Gastrocnemius medialis (tissue), 4 donors: ENCODE measurements at regions of chr14 and their contacts with region 1.

Region 1: DNA sequence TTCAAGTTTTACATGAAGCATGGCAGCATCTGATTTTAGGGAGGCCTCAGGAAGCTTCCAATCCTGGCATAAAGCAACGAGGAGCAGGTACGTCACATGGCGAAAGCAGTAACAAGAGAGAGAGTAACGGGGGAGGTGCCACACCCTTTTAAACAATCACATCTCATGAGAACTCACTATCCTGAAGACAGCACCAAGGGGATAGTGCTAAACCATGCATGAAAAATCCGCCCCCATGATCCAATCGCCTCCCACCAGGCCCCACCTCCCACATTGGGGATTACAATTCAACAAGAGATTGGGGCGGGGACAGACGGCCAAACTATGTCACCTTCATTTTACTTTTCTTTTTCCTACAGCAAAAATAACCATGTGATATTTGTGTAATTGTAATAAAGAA is 7.2 kb upstream of the MAP3K9 start:
- DNase-seq: no peak
- ATAC-seq: no peak
- H3K4me3 ChIP-seq: no peak overlapping the region
- H3K27ac ChIP-seq: no peak overlapping the region
- H3K4me1 ChIP-seq: peaks cover 7% of the 10 kb centered on the region in 2 donors
- H3K27me3 ChIP-seq: peaks cover 2 to 9% (median 6%) of the 10 kb centered on the region in 3 donors
- CTCF ChIP-seq: no peak
- POLR2A ChIP-seq: no peak

Region 2: GRCh38 chr14:70600382-70601157 is 216.0 kb before region 1 on chr14 and contains the start of gene MED6:
- in situ Hi-C with region 1: loop called in 2 of 4 experiments (anchors 5 to 10 kb)
- intact Hi-C with region 1: loop called (anchors 5 kb)
- DNase-seq: peak; percentile 87 to 91
- ATAC-seq: peak; percentile 98 to 100
- H3K4me3 ChIP-seq: peak within 1 kb of the TSS; percentile 77 to 98 (median 92)
- H3K27ac ChIP-seq: peak within 1 kb of the TSS; percentile 78 to 89 (median 80)
- H3K4me1 ChIP-seq: peaks cover 15 to 18% of the 10 kb centered on the region in 2 donors
- H3K27me3 ChIP-seq: no peaks in the 10 kb centered on the region
- CTCF ChIP-seq: no peak
- POLR2A ChIP-seq: peak in 1 of 2 donors; percentile 31
- total RNA-seq, gene MED6: 13.9 to 25.0 (median 20.2) TPM

Region 3: DNA sequence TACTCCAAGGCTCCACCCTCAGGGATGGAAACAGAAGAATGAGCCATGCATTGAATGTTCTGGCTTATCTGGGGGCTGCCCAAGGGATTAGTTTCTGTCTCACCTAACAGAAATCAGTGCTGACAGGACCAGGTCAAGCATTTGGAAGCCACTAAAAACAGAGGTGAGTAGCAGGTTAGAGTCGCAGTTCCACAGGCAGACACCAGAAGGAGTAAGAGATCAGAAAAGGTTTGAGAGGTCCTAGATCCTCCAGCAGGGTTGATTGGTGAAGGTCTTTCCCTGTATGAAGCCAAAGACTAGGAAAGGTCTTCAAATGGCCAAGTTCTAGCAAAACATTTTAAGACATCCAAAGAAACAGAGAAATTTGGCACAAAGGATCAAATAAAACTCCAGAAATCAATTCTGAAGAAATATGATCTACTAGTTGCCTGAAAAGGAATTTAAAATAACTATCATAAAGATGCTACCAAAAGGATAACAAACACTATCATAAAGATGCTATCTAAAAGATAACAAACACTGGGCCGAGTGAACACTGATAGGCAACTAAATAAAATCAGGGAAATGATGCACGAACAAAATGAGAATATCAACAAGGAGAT is 194.3 kb before region 1 on chr14:
- in situ Hi-C with region 1: loop called in 1 of 4 experiments (anchors 10 kb)
- intact Hi-C with region 1: loop called (anchors 2 kb)
- DNase-seq: peak in 1 of 2 donors; percentile 17
- ATAC-seq: no peak
- H3K4me3 ChIP-seq: no peak overlapping the region
- H3K27ac ChIP-seq: no peak overlapping the region
- H3K4me1 ChIP-seq: no peaks in the 10 kb centered on the region
- H3K27me3 ChIP-seq: no peaks in the 10 kb centered on the region
- CTCF ChIP-seq: peak; percentile 28 to 67 (median 49)
- POLR2A ChIP-seq: no peak

Region 4: DNA sequence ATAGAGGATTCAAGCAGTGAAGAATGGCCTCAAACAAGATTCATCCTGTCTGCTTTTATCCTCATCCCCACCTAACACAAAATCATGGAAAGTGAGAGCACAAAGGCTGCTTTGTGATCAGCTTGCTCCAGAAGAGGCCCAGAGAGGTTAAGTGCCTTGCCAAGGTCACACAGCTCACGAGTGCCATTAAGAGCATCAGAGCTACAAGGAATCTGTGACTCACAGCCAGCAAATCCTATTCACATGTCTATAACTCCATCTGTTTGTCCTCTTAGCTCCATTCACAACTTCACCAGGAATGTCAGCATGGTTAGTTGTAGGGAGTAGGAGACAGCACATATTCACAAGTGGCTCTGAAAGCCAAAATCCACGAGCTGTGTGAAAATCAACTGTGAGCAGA is 95.0 kb before region 1 on chr14:
- in situ Hi-C with region 1: no loop called
- intact Hi-C with region 1: loop called (anchors 2 kb)
- DNase-seq: no peak
- ATAC-seq: peak in 1 of 2 donors; percentile 51
- H3K4me3 ChIP-seq: no peak overlapping the region
- H3K27ac ChIP-seq: peak overlapping the region in 1 of 4 donors; percentile 5
- H3K4me1 ChIP-seq: peaks cover 15 to 18% of the 10 kb centered on the region in 2 donors
- H3K27me3 ChIP-seq: no peaks in the 10 kb centered on the region
- CTCF ChIP-seq: no peak
- POLR2A ChIP-seq: no peak

Region 5: DNA sequence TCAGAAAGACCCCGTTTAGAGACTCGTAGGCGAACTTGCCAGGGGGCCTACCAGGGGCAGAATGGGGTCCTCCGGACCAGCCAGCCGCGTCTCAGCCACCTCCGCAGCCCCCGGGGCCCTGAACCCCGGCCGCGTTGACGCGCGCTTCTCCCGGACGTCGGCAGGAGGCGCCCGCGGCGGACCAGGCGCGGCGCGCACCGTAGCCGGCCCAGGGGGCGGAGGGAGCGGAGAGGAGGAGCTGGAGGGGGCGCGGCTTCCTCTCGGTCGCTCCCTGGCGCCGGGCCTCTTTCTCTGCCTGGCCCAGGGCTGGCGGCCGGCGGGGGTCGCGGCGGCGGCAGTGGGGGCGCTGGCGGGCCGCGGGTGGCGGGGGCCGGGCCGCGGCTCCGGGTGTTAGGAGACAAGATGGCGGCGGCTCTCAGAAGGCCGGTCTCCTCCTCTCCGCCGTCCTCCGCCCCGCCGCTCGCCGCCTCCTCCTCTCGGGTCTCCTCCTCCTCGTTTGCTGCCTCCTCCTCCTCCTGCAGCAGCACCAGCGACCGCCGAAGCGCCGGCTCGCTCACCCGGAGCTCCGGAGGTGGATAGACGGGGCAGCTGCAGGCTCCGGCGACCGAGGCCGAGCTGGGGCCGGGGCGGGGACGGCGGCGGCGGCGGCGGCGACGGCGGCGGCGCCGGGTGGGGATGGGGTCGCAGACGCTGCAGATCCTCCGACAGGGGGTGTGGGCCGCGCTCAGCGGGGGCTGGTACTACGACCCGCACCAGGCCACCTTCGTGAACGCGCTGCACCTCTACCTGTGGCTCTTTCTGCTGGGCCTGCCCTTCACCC is 90.9 kb after region 1 on chr14 and contains the start of gene PCNX1:
- in situ Hi-C with region 1: no loop called
- intact Hi-C with region 1: loop called (anchors 5 kb)
- DNase-seq: peak; percentile 72 to 83
- ATAC-seq: peak; percentile 81
- H3K4me3 ChIP-seq: peak within 1 kb of the TSS; percentile 75 to 99 (median 92)
- H3K27ac ChIP-seq: peak within 1 kb of the TSS; percentile 82 to 97 (median 88)
- H3K4me1 ChIP-seq: peaks cover 24 to 34% of the 10 kb centered on the region in 2 donors
- H3K27me3 ChIP-seq: no peaks in the 10 kb centered on the region
- CTCF ChIP-seq: peak; percentile 74 to 95 (median 94)
- POLR2A ChIP-seq: peak; percentile 72 to 73
- total RNA-seq, gene PCNX1: 34.4 to 64.5 (median 42.0) TPM